GM12878 (cell line): ENCODE measurements at regions of chr17 and their contacts with region 1.

Region 1: DNA sequence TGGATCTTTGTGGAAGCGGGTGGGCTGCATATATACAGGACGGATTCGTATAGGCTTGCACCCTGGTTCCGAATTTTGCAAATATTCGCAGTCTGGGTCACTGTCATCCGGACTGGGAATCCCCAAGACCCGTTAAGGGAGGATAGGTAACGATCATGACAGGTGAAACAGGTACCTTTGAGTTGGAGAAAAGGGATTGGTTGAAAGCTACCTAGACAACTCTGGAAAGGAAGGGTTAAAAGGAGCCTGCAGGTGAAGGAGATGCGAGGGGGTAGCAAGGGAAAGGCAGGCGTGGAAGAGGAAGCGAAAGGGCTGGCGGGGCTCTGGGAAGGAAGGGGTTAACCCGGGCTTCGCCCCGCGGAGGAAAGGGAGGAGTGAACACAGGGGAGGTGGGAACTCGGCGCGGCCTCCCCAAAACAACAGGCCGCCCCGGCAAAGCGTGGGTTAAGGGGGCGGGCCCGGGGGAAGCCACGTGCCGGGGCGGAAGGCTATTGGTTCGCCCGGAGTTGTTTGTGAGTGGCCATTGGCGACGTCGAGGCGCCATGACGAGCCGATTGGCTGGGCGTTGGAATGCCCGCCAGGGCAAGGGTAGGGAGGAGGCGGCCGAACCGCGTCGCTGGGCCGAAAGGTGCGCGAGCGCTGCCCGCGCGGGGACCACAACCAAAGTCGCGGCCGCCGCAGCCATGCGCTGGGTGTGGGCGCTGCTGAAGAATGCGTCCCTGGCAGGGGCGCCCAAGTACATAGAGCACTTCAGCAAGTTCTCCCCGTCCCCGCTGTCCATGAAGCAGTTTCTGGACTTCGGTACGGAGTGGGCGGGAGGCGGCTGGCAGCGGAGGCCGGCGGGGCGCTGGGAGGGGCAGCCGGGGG is at the start of gene PDK2:
- DNase-seq: peak; percentile 78
- ATAC-seq: peak; percentile 98
- H3K4me3 ChIP-seq: peak within 1 kb of the TSS; percentile 85
- H3K27ac ChIP-seq: peak within 1 kb of the TSS; percentile 44
- H3K4me1 ChIP-seq: peaks cover 17% of the 10 kb centered on the region
- H3K27me3 ChIP-seq: no peaks in the 10 kb centered on the region
- CTCF ChIP-seq: no peak
- EP300 ChIP-seq: peak in 1 of 2 experiments; percentile 38; a peak in 1 of 4 replicates
- POLR2A ChIP-seq: peak; percentile 71
- RAD21 ChIP-seq: no peak
- polyA plus RNA-seq, gene PDK2: 0.98 to 1.2 TPM

Region 2: DNA sequence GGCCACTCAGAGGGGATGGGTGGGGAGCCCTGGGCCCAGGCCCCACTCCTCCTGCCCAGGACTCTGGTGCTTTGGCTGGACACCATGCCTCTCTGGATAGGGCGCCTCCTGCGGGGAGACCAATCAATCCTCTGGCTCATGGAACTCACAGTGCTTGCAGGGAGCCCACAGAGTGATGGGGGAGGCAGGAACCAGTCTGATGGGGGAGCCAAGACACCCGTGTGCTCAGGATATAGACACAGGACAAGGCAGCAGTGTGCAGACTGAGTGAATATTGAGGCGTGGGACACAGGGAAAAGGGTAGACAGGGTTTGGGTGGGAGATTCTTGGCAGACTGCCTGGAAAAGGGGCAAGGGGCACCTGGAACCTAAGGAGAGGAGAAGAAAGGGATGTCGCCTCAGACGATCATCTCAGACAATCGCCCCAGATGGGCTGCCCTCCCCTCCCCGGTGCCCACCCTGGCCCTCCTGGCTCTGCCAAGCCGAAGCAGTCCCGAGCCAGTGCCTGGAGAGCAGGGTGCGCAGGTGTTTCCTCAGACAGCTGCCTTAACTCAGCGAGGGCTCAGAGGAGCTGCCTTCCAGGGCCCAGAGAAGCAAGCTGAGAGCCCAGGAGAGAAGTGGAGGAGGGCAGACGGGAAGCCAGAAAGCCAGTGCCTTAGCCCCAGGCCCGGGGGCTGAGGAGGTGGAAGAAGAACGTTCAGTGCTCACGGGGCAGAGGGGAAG is 163.4 kb before region 1 on chr17:
- CTCF ChIA-PET with region 1: no interaction called
- POLR2A ChIA-PET with region 1: no interaction called
- RAD21 ChIA-PET with region 1: no interaction called
- SMC1A ChIA-PET with region 1: no interaction called
- in situ Hi-C with region 1: no loop called
- intact Hi-C with region 1: no loop called
- DNase-seq: no peak
- ATAC-seq: no peak
- H3K4me3 ChIP-seq: no peak overlapping the region
- H3K27ac ChIP-seq: no peak overlapping the region
- H3K4me1 ChIP-seq: no peaks in the 10 kb centered on the region
- H3K27me3 ChIP-seq: peaks cover 2 to 3% of the 10 kb centered on the region in 2 experiments; a peak in 3 of 4 replicates
- CTCF ChIP-seq: no peak
- EP300 ChIP-seq: no peak
- POLR2A ChIP-seq: no peak
- RAD21 ChIP-seq: no peak

Region 3: DNA sequence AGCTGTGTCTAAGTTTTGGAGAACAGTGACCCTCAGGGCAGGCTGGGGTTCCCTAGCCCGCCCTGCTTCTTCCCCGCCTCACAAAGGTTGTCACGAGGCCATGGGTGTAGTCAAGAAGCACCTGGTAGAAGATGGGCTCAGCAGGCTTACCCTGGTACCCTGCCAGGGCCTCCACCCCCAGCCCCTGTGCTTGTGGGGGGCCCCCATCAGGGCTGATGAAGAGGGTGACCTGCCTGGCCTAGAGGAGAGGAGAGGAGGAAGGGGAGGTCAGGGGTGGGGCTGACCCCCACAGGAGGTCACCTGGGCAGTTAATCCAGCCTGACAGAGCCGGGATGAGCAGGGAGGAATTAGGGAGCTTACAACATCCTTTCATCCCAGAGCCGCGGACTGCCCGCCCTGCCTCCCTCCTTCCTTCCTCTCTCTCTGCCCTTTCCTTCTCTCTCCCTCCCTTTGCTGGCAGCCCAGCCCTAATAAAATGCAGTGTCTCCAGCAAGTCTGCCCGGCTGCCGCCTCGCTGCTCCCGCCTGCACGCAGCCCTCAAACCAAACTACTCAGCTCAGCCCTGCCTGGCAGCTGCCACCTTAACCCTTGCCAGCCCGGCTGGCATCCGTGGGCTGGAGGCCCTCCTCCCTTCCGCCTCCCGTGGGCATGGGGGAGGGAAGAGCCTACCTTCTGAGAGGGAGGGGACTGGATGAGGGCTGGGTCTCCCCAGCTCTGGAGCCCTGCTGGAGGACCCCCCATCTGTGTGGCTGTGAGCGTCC is 107.1 kb before region 1 on chr17:
- CTCF ChIA-PET with region 1: no interaction called
- POLR2A ChIA-PET with region 1: no interaction called
- RAD21 ChIA-PET with region 1: no interaction called
- SMC1A ChIA-PET with region 1: no interaction called
- in situ Hi-C with region 1: no loop called
- intact Hi-C with region 1: no loop called
- DNase-seq: no peak
- ATAC-seq: no peak
- H3K4me3 ChIP-seq: no peak overlapping the region
- H3K27ac ChIP-seq: no peak overlapping the region
- H3K4me1 ChIP-seq: no peaks in the 10 kb centered on the region
- H3K27me3 ChIP-seq: peaks cover 4 to 13% of the 10 kb centered on the region in 2 experiments; a peak in 3 of 4 replicates
- CTCF ChIP-seq: no peak
- EP300 ChIP-seq: no peak
- POLR2A ChIP-seq: no peak
- RAD21 ChIP-seq: no peak

Region 4: GRCh38 chr17:49997791-49998703 is 96.9 kb before region 1 on chr17:
- CTCF ChIA-PET with region 1: interaction called, 26 read pairs
- POLR2A ChIA-PET with region 1: no interaction called
- RAD21 ChIA-PET with region 1: interaction called, 3 read pairs
- SMC1A ChIA-PET with region 1: interaction called, 9 read pairs
- in situ Hi-C with region 1: no loop called
- intact Hi-C with region 1: no loop called
- DNase-seq: peak; percentile 34
- ATAC-seq: peak; percentile 96
- H3K4me3 ChIP-seq: no peak overlapping the region
- H3K27ac ChIP-seq: no peak overlapping the region
- H3K4me1 ChIP-seq: 0 out of 2 replicates have a peak, but pooled peaks cover 3% of the 10 kb centered on the region
- H3K27me3 ChIP-seq: peaks cover 10 to 28% of the 10 kb centered on the region in 2 experiments
- CTCF ChIP-seq: peak; percentile 89 to 95 (median 91)
- EP300 ChIP-seq: no peak
- POLR2A ChIP-seq: no peak
- RAD21 ChIP-seq: peak; percentile 88

Region 5: GRCh38 chr17:50060951-50061692 is 33.9 kb before region 1 on chr17:
- CTCF ChIA-PET with region 1: interaction called, 38 read pairs
- POLR2A ChIA-PET with region 1: no interaction called
- RAD21 ChIA-PET with region 1: interaction called, 5 read pairs
- SMC1A ChIA-PET with region 1: interaction called, 7 read pairs
- in situ Hi-C with region 1: no loop called
- intact Hi-C with region 1: loop called (anchors 2 kb)
- DNase-seq: no peak
- ATAC-seq: no peak
- H3K4me3 ChIP-seq: no peak overlapping the region
- H3K27ac ChIP-seq: no peak overlapping the region
- H3K4me1 ChIP-seq: peaks cover 5% of the 10 kb centered on the region; the same call in 1 of the 2 replicates
- H3K27me3 ChIP-seq: no peaks in the 10 kb centered on the region
- CTCF ChIP-seq: no peak
- EP300 ChIP-seq: no peak
- POLR2A ChIP-seq: no peak
- RAD21 ChIP-seq: no peak

Region 6: DNA sequence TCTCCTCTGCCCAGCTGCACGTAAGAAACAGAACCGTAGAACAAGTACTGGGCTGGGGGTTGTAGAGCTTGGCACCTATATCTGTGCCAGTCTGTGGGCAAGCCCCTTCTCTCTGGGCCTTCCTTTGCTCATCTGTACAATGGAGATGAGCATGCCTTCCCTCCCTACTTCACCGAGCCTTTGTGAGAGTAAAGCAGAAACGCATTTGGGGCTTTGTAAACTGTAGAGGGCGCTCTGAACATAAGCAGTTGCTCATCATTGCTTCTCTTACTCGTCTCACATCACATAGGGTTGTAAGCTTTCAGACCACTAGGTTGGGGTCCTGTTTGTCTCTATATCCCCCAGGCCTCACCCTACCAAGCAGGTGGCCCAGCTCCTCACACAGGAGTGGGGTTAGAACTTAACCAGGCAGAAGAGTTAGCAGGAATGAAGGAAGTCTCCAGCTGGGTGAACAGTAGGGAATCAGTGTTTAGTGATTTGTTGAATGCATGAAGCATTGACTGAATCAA is 19.9 kb after region 1 on chr17:
- CTCF ChIA-PET with region 1: interaction called, 21 read pairs
- POLR2A ChIA-PET with region 1: no interaction called
- RAD21 ChIA-PET with region 1: interaction called, 7 read pairs
- SMC1A ChIA-PET with region 1: interaction called, 8 read pairs
- in situ Hi-C with region 1: no loop called
- intact Hi-C with region 1: no loop called
- DNase-seq: no peak
- ATAC-seq: peak; percentile 74
- H3K4me3 ChIP-seq: no peak overlapping the region
- H3K27ac ChIP-seq: no peak overlapping the region
- H3K4me1 ChIP-seq: no peaks in the 10 kb centered on the region
- H3K27me3 ChIP-seq: peaks cover 6% of the 10 kb centered on the region in 2 experiments; a peak in 3 of 4 replicates
- CTCF ChIP-seq: peak; percentile 69 to 77 (median 72)
- EP300 ChIP-seq: no peak
- POLR2A ChIP-seq: no peak
- RAD21 ChIP-seq: peak; percentile 64

Region 7: DNA sequence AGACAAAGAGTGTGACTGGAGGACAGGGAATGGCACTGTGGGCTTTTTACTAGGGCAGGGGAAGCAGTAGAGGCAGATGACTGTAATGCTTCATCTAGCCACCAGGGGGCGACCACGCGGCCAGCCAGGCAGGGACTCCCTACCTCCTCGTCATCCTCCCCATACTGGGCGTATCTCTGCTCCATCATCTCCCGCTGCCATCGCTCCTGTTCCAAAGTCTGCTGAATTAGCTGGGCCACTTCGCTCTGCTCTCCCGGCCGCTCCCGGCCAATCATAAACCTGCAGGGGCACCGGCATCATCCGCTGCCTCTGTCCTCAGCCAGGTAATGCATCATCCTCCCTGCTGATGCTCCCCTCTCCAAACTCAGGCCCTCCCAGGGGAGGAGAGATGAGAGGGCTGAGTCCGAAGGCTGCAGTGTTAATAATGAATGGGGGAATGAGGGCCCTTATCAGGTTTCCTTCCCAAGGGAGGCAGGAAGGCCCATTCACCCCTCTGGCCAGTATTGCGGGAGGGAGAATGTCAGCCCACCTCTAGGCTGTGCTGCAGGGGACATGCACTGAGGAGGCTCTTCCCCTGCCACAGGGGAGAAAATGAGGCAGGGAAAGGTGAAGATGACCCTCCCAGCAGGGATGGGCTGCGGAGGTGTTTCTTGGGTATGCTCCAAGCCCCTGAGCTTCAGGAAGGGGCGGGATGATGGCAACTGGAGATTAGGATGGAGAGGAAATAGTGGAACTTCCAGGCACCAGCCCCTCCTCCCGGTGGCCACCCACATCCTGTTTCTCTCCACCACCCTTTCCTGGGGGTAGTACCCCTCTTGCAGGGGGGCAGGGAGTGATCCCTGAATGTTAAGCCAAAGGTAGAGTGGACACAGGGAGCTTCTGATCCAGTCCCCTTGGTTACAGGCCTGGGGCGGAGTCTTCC is 45.2 kb after region 1 on chr17:
- CTCF ChIA-PET with region 1: interaction called, 20 read pairs
- POLR2A ChIA-PET with region 1: interaction called, 6 read pairs
- RAD21 ChIA-PET with region 1: no interaction called
- SMC1A ChIA-PET with region 1: interaction called, 6 read pairs
- in situ Hi-C with region 1: no loop called
- intact Hi-C with region 1: loop called (anchors 5 kb)
- DNase-seq: no peak
- ATAC-seq: peak; percentile 94
- H3K4me3 ChIP-seq: no peak overlapping the region
- H3K27ac ChIP-seq: no peak overlapping the region
- H3K4me1 ChIP-seq: peaks cover 38% of the 10 kb centered on the region
- H3K27me3 ChIP-seq: no peaks in the 10 kb centered on the region
- CTCF ChIP-seq: peak; percentile 93 to 96 (median 94)
- EP300 ChIP-seq: no peak
- POLR2A ChIP-seq: peak; percentile 20
- RAD21 ChIP-seq: peak; percentile 53

Region 8: DNA sequence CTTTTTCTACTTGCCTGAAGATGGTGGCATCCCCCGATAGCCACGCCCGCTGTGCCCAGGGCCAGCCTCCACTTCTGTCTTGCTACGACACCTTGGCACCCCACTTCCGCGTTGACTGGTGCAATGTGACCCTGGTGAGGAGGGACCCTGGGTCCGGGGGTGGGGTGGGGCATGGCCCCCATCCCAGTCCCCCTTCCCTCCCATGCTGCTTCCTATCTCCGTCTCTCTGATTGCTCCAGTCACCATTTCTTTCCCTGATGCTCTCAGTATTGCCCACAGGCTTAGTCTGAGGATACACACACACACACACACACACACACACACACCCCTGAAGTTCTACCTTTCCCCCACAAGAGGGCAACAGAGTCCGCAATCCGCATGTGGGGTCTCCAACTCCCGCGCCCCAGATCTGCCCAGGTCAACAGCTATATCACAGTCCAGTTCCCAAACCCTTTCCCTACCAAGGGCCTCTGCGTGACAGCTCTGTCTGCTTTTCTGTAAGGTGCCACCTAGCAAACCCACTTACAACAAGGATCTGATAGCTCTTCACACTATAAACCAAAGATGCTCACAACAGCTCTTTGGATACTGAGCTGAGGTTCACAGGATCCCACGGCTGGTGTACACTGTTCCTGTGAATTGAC is 74.3 kb after region 1 on chr17:
- CTCF ChIA-PET with region 1: interaction called, 12 read pairs
- POLR2A ChIA-PET with region 1: interaction called, 4 read pairs
- RAD21 ChIA-PET with region 1: interaction called, 11 read pairs
- SMC1A ChIA-PET with region 1: interaction called, 9 read pairs
- in situ Hi-C with region 1: no loop called
- intact Hi-C with region 1: no loop called
- DNase-seq: peak; percentile 44
- ATAC-seq: peak; percentile 73
- H3K4me3 ChIP-seq: no peak overlapping the region
- H3K27ac ChIP-seq: no peak overlapping the region
- H3K4me1 ChIP-seq: peaks cover 18% of the 10 kb centered on the region
- H3K27me3 ChIP-seq: no peaks in the 10 kb centered on the region
- CTCF ChIP-seq: peak; percentile 88 to 95 (median 90)
- EP300 ChIP-seq: no peak
- POLR2A ChIP-seq: no peak
- RAD21 ChIP-seq: peak; percentile 96

Region 9: DNA sequence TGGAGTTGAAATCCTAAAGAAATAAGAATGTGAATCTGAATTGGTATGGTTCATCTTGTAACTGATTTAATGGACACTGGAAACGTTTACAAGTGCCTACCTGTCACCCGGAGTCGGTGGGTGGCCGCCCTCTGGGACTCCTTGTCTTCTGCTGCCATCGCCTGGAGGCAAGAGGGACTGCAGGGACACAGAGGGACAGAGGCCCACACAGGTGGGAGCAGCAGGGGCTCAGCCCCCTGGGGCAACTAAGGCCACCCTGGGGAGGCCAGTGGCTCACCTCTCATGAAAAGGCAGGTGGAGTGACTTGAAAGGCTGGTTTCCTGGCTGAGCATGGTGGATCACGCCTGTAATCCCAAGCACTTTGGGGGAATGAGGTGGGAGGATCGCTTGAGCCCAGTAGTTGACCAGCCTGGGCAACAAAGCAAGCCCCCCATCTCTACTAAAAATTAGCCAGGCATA is 202.4 kb after region 1 on chr17:
- CTCF ChIA-PET with region 1: interaction called, 56 read pairs
- POLR2A ChIA-PET with region 1: no interaction called
- RAD21 ChIA-PET with region 1: interaction called, 8 read pairs
- SMC1A ChIA-PET with region 1: interaction called, 23 read pairs
- in situ Hi-C with region 1: no loop called
- intact Hi-C with region 1: loop called (anchors 1 kb)
- DNase-seq: no peak
- ATAC-seq: peak; percentile 99
- H3K4me3 ChIP-seq: no peak overlapping the region
- H3K27ac ChIP-seq: no peak overlapping the region
- H3K4me1 ChIP-seq: no peaks in the 10 kb centered on the region
- H3K27me3 ChIP-seq: no peaks in the 10 kb centered on the region
- CTCF ChIP-seq: peak; percentile 94 to 98 (median 97); a peak in 5 of 6 replicates
- EP300 ChIP-seq: no peak
- POLR2A ChIP-seq: no peak
- RAD21 ChIP-seq: peak; percentile 100